GM18951 (cell line): ENCODE measurements at regions of chr18 and their contacts with region 1.

Region 1: GRCh38 chr18:35756506-35757117 is 175.1 kb downstream of the GALNT1 start:
- POLR2A ChIP-seq: no peak

Region 2: DNA sequence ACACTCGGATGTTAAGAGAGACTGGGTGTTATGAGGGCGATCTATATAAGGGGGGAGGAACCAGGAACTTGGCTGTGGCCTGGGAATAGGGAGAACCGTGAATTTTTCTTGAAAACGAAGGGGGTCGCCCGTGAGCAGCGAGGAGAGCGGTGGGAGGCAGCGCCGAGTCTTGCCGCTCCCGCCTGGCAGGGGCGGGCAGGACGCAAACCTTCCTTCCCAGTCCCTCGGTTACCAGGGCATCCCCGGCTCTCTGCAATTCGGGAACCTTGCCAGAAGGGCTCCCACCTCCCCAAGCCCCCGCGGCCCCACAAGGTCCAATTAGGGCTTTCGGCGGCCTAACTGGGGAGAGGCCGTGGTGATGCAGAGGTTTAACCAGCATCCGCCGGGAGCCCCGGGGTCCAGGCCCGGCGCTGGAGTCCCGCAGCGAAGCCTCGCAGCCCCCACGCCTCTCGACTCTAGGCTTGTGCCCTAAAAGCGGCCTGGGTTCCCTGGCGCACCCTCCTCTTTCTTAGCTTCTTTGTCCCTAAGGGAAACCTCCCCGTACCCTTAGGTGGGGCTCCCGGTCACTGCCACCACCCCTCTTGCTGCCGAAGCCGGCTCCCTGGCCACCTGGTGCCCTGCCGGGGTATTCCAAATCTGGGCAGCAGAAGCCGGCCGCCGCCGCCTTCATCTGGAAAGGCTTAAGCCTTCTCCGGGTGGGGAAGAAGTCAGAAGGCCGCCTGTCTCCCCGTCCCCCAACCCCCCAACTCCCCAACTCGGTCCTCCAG is 540.2 kb after region 1 on chr18:
- in situ Hi-C with region 1: loop called (anchors 25 kb)
- POLR2A ChIP-seq: no peak